Ascending aorta (tissue), 2 donors: ENCODE measurements at regions of chr3 and their contacts with region 1.

Region 1: DNA sequence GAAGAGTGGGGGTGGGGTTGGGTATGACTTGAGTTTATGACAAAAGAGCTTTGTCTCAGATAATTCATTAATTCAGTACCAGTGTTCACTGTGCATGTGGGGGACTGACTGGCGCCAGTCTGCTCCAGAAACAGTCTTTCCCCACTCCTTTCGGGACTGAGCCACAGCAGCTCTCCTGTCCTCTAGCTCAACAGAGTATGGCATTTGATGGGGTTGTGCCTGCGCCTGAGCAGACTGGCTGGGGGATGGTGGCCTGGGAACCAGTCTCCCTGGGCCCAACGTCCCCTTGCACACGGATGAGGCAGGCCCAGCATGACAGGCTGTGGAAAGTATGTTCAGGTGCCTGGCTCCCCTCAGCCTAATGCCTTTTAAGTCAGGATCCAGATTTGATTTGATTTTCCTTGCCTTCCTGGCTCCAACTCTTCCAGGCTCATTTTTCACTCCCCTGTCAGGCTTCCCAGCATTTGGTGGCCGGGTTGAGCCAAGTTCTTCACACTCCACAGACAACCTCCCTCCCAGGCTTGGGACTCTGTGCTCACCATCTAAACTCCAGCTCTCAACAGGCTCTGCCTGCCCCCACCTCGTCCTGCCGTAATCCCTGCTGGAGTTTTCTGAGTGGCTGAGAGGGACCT is 105.0 kb downstream of the MYLK start:
- DNase-seq: peak; percentile 59 to 87
- H3K4me3 ChIP-seq: no peak overlapping the region
- H3K27ac ChIP-seq: peak overlapping the region; percentile 83 to 86
- H3K4me1 ChIP-seq: peaks cover 22 to 65% of the 10 kb centered on the region in 2 donors
- H3K27me3 ChIP-seq: no peaks in the 10 kb centered on the region
- CTCF ChIP-seq: no peak

Region 2: DNA sequence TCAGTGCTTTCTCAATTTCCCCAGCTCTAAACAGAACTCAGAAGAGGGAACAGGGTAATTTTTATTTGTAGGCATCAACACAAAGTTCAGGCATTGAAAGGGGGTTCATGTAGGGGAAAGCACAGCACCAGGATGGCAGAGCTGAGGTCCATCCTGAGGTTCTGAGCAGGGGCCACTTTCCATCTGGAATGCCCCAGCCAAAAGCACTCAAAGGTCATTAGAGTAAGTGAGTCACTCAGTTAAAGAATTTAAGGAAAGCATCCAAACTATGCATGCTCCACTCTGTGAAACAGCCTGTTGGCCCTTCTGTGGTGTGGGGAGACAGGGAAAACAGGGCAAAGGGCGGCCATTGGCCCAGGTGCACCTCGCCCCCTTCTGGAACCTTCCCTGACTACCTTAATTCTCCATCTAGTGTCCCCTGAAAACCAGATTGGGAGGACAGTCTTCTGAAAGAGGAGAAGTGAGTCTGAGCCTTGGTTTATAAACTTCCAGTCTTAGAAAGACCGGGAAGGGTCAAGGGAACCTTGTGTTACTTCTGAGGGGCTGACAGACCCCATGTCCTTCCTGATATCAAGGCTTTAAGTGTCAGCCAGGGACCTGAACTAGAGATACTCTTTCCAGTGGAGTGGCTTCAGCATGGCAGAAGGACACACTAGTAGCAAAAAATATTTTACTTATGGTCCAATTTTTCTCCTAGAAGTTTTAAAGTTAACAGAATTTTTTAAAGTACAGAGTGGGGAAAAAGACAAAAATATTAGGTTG is 28.3 kb before region 1 on chr3:
- intact Hi-C with region 1: loop called (anchors 2 kb)
- DNase-seq: peak in 1 of 2 donors; percentile 72
- H3K4me3 ChIP-seq: no peak overlapping the region
- H3K27ac ChIP-seq: peak overlapping the region; percentile 74 to 81
- H3K4me1 ChIP-seq: peaks cover 10 to 44% of the 10 kb centered on the region in 2 donors
- H3K27me3 ChIP-seq: no peaks in the 10 kb centered on the region
- CTCF ChIP-seq: no peak

Region 3: DNA sequence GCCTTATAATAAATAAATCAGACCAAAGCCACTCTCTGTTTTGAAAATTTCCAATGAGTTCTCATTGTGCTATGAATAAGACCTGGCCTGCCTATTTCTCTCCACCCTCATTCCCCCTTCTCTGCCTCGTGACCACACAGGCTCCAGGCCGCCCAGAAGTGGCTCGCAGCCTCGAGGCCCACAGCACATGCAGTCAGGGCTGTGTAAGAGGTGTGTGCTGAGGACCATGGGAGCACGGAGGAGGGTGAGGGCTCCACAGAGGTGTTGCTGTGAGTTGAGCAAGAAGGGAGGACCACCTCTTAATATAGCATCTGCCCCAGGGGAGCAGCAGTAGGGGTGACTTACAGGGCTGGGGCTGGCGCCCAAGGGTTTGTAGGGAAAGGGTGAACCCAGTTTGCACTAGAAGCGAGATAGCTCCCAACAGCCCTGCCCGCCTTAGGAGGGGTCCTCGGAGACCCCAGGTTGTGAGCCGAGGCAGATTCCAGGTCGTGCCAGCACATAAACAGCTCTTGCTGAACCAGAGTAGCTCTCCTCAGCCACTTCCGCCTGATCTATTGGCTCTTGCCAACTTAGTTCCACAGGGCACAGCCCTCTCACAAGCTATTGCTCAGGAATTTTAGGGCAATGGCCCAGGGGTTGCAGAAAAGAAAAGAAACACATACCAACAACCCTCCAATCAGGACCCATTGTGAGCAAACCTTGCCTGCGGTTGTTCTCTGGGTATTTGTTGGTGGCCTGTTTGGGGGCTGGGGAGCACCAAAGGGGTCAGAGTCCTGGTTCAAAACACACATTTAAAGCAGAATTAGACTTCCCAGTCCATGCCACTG is 12.7 kb before region 1 on chr3:
- intact Hi-C with region 1: loop called (anchors 1 kb)
- DNase-seq: peak; percentile 57 to 84
- H3K4me3 ChIP-seq: peak overlapping the region in 1 of 2 donors; percentile 12
- H3K27ac ChIP-seq: peak overlapping the region; percentile 91
- H3K4me1 ChIP-seq: peaks cover 16 to 43% of the 10 kb centered on the region in 2 donors
- H3K27me3 ChIP-seq: no peaks in the 10 kb centered on the region
- CTCF ChIP-seq: no peak

Region 4: GRCh38 chr3:123816673-123817207 is 37.6 kb after region 1 on chr3:
- intact Hi-C with region 1: loop called (anchors 5 kb)
- DNase-seq: no peak
- H3K4me3 ChIP-seq: no peak overlapping the region
- H3K27ac ChIP-seq: peak overlapping the region; percentile 86 to 91
- H3K4me1 ChIP-seq: peaks cover 11 to 44% of the 10 kb centered on the region in 2 donors
- H3K27me3 ChIP-seq: no peaks in the 10 kb centered on the region
- CTCF ChIP-seq: no peak

Region 5: GRCh38 chr3:125322166-125322565 is 1543.1 kb after region 1 on chr3:
- intact Hi-C with region 1: no loop called
- DNase-seq: no peak
- H3K4me3 ChIP-seq: no peak overlapping the region
- H3K27ac ChIP-seq: no peak overlapping the region
- H3K4me1 ChIP-seq: no peaks in the 10 kb centered on the region
- H3K27me3 ChIP-seq: no peaks in the 10 kb centered on the region
- CTCF ChIP-seq: no peak